Posterior cingulate gyrus (tissue), 11 donors: ENCODE measurements at regions of chr2 and their contacts with region 1.

Region 1: DNA sequence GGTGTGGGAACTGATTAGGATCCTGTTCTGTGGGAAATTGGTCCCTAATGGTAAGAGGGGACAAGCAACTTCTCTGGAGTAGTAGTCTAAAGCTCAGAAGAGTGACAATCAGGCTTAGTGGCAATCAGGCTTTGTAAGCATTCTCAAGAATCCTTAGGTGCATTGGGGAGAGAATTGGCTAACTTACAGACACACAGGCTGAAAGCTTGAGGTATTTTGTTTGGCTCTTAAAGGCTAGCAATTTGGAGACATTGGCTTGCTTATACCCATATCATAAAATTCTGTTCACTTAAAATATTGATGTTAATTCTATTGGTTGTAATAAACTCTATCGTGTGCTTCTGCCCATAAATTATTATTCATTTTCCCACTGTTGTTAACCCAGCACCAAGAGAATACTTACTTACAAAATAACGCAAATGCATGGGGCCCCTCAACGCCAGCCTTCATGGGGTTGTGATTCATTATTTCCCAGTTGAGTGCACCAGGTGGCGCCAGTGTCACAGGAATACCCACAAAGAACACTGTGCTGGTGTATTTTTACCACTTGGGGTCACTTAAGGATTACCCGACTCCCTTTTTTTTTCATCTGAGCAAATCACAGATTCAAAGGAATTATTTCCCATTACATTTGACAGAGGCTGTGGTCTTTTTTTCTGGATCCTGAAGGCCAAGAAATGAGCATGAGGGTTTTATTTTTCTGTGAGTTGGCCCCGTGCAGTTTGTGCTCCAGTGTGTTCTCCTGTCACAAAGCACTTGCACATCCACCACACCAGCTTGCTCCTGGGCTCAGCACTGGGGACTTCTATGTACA is 45.5 kb downstream of the DDX1 start:
- DNase-seq: peak; percentile 45 to 95 (median 81)

Region 2: DNA sequence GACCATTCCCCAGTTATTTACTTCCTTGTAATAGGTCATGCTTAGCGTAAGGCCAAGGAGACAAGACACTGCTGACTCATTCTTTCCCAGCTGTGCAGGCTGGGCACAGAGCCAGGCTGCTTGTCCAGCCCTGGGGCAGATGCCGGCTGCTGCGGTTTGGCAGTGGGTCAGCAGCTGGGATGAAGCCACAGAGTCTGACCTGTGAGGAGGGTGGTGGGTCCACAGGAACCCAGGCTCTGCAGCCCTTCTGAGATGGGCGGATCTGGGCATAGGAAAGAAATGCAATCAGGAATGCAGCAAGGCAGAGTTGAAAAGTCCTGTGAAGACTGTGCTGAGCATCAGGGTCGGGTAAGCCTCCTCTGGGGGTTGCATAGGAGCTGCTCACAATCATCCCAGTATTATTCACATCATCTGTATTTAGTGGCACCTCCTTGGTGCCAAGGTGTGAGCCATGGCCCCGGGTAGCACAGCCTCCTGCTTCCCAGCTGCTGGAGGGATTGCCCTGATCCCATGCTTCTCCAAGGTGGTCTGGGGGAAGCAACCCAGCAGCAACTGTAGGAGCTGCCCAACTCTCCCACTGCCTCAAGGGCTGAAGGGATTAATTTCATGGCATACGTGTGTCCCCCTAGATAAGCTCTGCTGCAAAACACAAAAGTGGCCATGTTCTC is 93.5 kb after region 1 on chr2:
- intact Hi-C with region 1: loop called (anchors 5 kb)
- DNase-seq: peak; percentile 69 to 98 (median 90)

Region 3: DNA sequence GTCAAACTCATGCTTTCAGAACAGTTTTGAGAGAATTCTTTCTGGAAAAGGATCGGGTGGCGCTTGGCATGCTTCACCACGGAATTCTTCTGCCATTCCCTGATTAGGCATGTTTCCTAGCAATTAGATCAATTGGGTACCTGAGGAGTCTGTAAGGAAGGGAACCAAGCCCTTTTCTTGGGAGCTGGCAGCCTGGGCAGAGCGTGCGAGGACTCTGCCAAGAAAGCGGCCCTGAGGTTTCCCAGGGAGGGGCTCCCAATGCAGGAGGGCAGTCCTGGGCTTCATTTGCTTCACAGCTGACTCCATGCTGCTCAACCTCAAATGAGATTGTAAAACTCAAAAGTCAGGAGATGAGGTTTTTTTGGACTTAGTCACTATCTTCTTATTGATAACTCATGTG is 363.5 kb after region 1 on chr2:
- intact Hi-C with region 1: no loop called
- DNase-seq: no peak

Region 4: DNA sequence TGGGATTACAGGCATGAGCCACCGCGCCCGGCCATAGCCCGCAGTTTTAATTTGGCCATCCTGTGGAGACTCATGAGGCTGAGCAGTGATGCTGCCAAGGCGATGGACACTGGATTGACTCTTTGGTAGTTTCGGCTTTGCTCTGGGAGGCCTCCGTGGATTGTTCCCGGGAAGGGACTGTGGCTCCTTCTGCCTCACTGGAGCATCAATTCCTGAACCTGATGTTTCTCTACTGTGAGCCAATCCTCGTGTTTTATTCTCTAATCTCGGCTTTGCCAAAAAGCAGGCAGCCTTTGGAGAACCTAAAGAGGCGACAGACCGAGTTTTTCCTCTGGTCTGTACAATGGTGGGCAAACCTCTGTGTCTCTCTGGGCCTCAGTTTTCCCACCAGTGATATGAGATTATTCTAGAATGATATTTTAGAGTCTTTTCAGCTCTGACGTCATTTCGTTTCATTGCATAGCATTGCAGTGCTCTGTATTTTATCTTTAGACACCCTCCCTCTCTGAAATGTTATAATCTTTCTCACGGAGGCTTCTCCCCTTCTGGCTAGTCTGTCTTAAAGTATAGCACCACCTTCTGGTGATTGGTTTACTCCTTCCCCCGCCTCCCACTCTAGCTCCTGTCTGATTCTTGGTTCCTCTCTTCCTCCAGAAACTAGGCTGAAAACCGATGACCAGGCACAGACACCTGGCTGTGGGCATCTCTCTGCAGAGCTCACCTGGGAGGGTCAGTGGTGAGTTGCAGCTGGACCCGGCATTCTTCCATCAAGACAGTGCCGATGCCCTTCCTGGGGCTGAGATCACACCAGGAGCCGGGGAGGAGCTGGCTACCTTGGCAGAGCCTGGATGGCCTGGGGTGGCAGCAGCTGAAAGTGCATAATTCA is 644.5 kb after region 1 on chr2:
- intact Hi-C with region 1: loop called (anchors 2 kb)
- DNase-seq: peak in 7 of 10 donors; percentile 19 to 87 (median 38)

Region 5: GRCh38 chr2:16321872-16322271 is 684.7 kb after region 1 on chr2:
- intact Hi-C with region 1: loop called (anchors 1 kb)
- DNase-seq: peak in 2 of 10 donors; percentile 19 to 52

Region 6: GRCh38 chr2:16487686-16488085 is 850.5 kb after region 1 on chr2:
- intact Hi-C with region 1: loop called (anchors 5 kb)
- DNase-seq: peak in 2 of 10 donors; percentile 20 to 77

Region 7: GRCh38 chr2:16507655-16508489 is 870.7 kb after region 1 on chr2:
- intact Hi-C with region 1: loop called (anchors 1 kb)
- DNase-seq: peak; percentile 26 to 95 (median 60)

Region 8: DNA sequence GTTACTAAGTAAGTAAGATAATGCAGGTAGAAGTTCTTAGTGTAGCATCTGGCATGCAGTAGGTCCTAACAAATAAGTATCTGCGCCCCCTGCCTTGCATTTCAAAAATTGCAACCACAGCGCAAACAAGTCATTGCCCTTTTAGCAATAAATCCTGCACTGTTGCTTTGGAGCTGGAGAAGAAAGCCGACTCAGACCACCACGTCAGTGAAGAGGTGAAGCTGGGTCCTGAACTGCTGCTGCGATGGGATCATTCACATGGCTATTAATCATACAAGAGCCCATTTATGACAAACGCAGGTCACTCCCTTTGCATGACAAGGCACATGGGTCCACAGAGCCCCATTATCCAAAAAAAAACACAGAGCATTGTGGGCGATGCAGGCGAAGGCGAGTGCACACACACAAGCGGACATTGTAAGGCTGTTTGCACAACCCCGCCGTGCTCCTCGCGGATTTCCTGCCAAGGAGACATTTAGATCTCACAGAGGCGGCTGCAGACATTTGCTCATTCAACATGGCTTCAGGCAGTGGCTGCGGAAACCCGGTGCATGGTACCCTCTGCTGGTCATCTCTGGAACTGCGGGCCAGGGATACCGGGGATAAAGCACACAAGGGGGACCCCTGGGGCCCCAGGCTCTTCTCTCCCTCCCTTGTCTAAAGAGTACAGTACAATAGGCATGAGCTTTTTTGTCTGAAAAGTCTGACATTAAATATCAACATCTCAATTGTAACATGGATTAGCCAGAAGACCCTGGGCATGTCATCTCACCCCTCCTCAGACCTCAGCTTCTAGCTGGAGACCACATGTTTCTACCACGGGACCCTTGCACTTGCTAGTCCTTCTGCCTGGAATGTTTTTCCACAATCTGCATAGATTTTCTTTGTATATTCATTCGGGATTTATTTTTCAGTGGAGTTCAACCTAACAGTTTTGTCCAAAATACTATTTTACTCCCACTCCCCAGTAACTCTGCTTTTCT is 971.8 kb after region 1 on chr2:
- intact Hi-C with region 1: loop called (anchors 2 kb)
- DNase-seq: peak; percentile 70 to 98 (median 90)